ENCODE measurements at regions of chr4 and their contacts with region 1.

Region 1: DNA sequence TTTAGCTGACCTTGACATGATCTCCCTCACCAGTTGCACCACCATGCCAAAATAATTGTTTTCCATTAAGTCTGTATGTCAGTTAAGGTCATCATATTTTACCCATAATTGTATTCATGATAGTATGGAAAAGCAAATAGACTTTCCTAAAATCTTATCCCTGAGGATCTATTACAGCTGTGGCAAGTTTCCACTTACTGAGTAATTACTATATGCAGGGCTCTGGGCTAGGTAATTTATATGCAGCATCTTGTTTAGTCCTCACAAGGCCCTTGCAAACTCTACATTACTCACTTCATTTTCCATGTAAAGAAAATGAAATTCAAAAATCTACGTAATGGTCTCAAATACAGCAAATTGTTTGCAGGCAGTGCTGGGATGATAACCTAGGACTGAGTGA is 34.8 kb downstream of the YIPF7 start:
- DNase-seq: no peak
- H3K4me3 ChIP-seq: no peak overlapping the region
- H3K27ac ChIP-seq: no peak overlapping the region
- H3K4me1 ChIP-seq: no peaks in the 10 kb centered on the region
- H3K27me3 ChIP-seq: no peaks in the 10 kb centered on the region
- CTCF ChIP-seq: no peak

Region 2: GRCh38 chr4:42995343-42995944 is 1621.2 kb before region 1 on chr4:
- intact Hi-C with region 1: loop called (anchors 10 kb)
- DNase-seq: no peak
- H3K4me3 ChIP-seq: no peak overlapping the region
- H3K27ac ChIP-seq: no peak overlapping the region
- H3K4me1 ChIP-seq: no peaks in the 10 kb centered on the region
- H3K27me3 ChIP-seq: no peaks in the 10 kb centered on the region
- CTCF ChIP-seq: peak; percentile 42

Region 3: DNA sequence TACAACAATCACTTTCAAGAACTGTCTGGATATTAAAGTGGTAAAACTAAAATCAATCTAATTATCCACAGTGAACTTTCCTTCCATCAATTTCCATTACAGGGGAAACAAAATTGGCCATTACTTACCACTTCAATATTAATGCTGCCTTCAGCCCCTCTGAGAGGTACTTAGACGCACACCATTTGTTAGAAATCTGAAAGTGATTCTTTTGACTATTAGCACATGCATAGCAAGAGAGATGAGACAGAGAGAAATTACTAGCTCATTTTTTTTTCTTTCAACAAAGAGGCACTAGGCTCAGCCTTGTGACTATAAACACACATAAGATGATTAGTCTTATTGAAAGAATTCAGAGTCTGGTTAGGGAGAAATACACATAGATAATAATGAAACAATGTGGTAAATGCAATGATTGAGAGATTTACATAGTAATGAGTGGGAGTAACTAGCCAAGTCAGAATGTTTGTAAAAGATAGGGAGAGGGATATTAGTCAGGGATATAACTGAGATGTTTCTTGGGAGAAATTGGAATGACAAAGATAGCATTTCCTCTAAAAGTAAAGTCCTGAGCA is 58.5 kb before region 1 on chr4:
- intact Hi-C with region 1: no loop called
- DNase-seq: no peak
- H3K4me3 ChIP-seq: no peak overlapping the region
- H3K27ac ChIP-seq: no peak overlapping the region
- H3K4me1 ChIP-seq: no peaks in the 10 kb centered on the region
- H3K27me3 ChIP-seq: no peaks in the 10 kb centered on the region
- CTCF ChIP-seq: no peak

Region 4: GRCh38 chr4:44726262-44726871 is 109.7 kb after region 1 on chr4 and contains the start of gene GNPDA2:
- intact Hi-C with region 1: no loop called
- DNase-seq: peak; percentile 92
- H3K4me3 ChIP-seq: peak within 1 kb of the TSS; percentile 77
- H3K27ac ChIP-seq: peak within 1 kb of the TSS; percentile 70
- H3K4me1 ChIP-seq: no peaks in the 10 kb centered on the region
- H3K27me3 ChIP-seq: no peaks in the 10 kb centered on the region
- CTCF ChIP-seq: no peak
- total RNA-seq, gene GNPDA2: 4.7 to 8.9 TPM

Measured in colonic mucosa (tissue), 4 donors.